ENCODE measurements at regions of chr16 and their contacts with region 1.

Region 1: DNA sequence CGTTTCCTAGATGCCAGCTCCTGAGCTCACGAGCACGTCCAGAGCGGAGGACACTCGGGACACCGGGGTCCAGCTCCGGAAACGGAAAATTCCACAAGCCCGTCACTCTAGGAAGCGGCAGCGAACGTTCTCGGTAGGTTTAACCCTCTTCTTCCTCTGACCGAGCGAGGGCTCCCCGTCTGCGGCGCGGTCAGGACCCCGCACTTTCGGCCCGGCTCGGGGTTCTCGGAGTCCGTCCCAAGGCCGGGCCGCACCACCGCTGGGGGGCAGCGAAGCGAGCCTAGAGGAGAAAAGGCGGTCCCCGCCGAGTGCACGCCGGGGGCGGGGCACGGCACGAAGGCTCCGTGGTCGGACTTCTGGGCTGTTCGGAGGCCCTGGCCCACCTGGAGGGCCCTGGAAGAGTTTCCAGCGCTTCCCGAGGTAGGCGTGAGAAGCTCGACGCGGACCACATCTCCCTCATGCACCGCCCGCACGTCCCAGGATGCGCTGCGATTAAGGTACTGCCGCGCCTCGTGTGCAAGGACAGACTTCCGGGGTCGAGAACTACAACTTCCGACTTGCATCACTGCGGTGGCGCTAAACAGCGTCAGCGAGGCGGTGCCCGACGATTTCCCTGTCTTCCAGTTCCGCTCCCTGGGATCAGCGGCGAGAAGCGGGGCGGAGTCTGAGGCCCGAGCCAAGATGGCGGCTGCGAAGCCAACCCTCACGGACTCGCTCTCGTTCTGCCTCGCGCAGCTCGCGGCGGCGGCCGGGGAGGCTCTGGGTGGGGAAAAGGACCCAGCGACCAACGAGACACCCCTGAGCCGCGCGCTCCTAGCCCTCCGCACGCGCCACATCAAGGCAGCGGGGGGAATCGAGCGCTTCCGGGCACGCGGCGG is at the start of gene ARMC5:
- DNase-seq: peak; percentile 96 to 100 (median 98)

Region 2: GRCh38 chr16:31073968-31074813 is 384.9 kb before region 1 on chr16 and contains the starts of genes ZNF646 and ZNF668:
- intact Hi-C with region 1: loop called (anchors 5 kb)
- DNase-seq: peak; percentile 97 to 100 (median 99)

Region 3: DNA sequence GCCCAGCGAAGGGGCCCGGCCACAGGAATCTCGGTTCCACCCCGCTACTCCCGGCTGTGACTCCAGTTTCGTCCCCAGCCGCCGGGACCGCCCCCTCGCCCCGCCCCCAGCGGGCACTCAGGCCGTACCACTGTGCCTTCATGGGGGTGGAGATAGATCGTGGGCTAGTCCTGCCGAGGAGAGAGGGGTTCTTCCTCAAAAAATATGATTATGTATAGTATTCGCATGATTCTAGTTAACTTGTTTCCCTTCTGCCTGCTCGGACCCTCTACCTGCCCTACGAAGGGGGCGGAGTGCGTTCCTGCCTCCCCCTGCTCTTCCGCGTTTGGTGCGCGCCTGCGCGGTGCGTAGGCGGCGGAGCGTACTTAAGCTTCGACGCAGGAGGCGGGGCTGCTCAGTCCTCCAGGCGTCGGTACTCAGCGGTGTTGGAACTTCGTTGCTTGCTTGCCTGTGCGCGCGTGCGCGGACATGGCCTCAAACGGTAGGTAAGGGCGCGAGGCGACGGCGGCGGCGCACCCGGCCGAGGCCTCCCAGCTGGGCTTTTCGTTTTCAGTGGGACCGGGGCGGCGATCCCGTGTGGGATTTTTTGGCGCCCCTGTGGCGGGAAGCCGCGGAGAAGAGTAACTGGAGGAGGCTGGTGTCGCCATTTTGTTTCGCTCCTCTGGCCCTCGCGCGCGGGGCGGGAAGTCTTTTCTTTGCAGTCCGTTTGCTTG is 279.2 kb before region 1 on chr16 and contains the start of gene FUS:
- intact Hi-C with region 1: loop called (anchors 10 kb)
- DNase-seq: peak; percentile 84 to 98 (median 90)

Region 4: GRCh38 chr16:31325171-31325570 is 133.9 kb before region 1 on chr16:
- intact Hi-C with region 1: no loop called
- DNase-seq: peak in 1 of 10 donors; percentile 56

Region 5: GRCh38 chr16:31713071-31713944 is 254.2 kb after region 1 on chr16:
- intact Hi-C with region 1: loop called (anchors 10 kb)
- DNase-seq: peak; percentile 87 to 99 (median 94)

Measured in posterior cingulate gyrus (tissue), 11 donors.